ENCODE measurements at regions of chr9 and their contacts with region 1.

Region 1: DNA sequence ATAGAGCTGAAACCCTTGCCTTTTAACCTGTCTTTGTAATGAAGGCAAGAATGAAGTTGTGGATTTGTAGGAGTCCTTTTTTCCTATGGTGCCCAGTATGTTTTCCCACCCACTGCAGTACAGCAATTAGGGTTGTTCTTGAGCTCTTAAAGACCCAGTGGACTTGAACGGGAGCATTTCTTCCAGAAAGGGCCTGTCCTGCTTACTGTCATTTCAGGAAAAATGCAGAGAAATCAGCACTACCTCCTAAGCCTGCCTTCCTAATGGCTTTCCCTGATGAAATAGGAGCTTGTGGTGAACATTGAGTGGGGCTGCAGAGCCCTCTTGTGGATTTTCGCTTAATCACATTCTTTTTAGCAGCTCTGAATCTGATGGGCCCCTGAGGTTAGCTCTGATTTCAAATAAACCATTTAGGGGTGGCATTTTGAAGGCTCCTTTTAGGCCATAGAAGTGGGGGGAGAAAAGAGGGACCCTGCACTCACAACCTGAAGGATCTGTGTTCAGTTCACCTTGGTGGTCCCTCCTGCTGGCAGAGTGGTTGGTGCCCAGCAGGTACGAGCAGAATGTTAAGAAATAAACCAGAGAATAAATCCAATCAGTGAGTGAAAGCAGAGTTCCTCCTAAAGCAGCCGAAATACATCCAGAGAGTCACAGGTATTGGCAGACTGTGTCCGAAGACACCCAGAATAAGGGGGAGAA is 188.0 kb upstream of the KLF9 start:
- DNase-seq: peak in 4 of 5 donors; percentile 50 to 62 (median 53)
- ATAC-seq: peak; percentile 51 to 63 (median 59)
- H3K4me3 ChIP-seq: peak overlapping the region in 8 of 12 donors; percentile 17 to 37 (median 20)
- H3K27ac ChIP-seq: peak overlapping the region; percentile 85 to 94 (median 90)
- H3K4me1 ChIP-seq: peaks cover 0 to 32% (median 25%) of the 10 kb centered on the region in 12 donors
- H3K27me3 ChIP-seq: no peaks in the 10 kb centered on the region
- CTCF ChIP-seq: peak; percentile 52 to 89 (median 80)
- POLR2A ChIP-seq: no peak

Region 2: DNA sequence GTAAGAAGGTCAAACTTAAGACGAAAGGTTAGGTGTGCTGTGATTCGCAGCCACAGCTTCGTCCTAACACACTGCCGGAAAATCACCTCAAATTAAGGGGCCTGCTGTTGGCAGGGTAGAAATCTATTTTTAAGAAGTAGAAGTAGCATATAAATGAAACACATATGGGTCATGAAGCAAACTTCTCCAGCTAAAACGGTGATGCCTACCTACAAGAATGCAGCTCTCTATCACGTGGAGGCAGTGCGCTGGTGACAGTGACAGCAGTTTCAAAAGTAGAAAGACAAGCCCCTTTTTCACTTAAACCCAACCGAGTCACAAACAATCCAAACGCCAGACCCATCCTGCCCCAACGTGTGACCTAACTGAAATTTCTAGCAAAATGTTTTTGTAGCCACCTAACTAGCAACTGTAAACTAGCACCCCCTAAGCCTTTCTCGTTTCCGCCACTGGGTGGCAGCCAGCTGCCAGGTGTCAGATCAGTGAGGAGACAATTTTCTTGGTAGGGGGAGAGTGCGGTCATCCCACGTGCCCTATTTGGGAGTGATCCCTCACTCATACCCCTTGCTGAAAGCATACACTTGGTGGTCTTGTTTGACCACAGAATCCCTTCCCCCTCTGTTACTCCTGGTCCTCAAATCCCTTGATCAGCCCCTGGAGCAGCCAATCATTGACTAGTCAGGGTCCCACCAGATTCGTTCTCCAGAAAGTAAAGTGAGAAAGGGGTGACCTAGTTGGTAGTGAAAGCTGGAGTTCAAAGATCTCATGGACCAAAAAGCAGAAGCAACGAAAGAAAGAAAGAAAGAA is 630.6 kb before region 1 on chr9:
- intact Hi-C with region 1: loop called in 6 of 10 experiments (anchors 5 kb)
- DNase-seq: peak; percentile 54 to 82 (median 71)
- ATAC-seq: peak; percentile 50 to 86 (median 76)
- H3K4me3 ChIP-seq: no peak overlapping the region
- H3K27ac ChIP-seq: no peak overlapping the region
- H3K4me1 ChIP-seq: peaks cover 0 to 10% (median 4%) of the 10 kb centered on the region in 12 donors
- H3K27me3 ChIP-seq: no peaks in the 10 kb centered on the region
- CTCF ChIP-seq: peak; percentile 67 to 94 (median 84)
- POLR2A ChIP-seq: no peak

Region 3: DNA sequence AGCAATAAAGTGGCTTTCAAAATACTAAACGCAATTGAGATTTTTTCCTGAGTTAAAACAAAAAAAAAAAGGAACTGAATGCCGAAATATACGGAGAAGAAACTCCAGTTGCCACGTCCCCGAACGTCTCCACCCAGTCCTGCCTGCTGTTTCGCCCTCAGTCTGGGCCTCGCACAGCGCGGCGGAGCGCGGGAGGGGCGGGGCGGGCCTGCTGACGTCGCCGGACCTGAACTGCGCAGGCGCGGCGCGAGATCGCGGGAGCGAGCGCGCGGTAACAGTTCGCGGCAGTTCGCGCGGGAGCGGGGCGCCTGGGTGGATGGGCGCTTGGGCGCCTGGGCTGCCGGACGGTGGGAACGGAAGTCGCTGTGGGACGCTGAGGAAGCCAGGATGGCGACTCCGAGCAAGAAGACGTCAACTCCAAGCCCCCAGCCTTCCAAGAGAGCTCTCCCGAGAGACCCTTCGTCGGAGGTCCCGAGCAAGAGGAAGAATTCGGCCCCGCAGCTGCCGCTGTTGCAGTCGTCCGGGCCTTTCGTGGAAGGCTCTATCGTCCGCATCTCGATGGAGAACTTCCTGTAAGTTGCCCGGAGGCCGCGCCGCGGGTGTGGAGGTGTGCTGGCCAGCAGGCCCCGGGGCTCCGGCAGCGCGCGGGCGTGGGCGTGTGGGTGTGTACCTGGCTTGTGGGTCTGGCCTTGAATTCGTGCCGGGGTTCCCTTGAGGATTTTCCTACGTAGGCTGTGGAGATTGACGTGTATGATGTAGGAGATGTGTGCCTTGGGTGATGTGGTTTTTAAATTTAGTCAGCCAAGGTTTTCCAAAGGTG is 343.6 kb before region 1 on chr9 and contains the start of gene SMC5:
- intact Hi-C with region 1: loop called in 4 of 10 experiments (anchors 2 to 10 kb)
- DNase-seq: peak; percentile 91 to 95 (median 92)
- ATAC-seq: peak; percentile 92 to 97 (median 95)
- H3K4me3 ChIP-seq: peak within 1 kb of the TSS; percentile 70 to 97 (median 85)
- H3K27ac ChIP-seq: peak within 1 kb of the TSS; percentile 86 to 97 (median 94)
- H3K4me1 ChIP-seq: peaks cover 5 to 58% (median 48%) of the 10 kb centered on the region in 12 donors
- H3K27me3 ChIP-seq: no peaks in the 10 kb centered on the region
- CTCF ChIP-seq: peak in 1 of 12 donors; percentile 9
- POLR2A ChIP-seq: peak; percentile 85 to 95
- total RNA-seq, gene SMC5: 8.4 to 14.6 (median 11.4) TPM

Region 4: DNA sequence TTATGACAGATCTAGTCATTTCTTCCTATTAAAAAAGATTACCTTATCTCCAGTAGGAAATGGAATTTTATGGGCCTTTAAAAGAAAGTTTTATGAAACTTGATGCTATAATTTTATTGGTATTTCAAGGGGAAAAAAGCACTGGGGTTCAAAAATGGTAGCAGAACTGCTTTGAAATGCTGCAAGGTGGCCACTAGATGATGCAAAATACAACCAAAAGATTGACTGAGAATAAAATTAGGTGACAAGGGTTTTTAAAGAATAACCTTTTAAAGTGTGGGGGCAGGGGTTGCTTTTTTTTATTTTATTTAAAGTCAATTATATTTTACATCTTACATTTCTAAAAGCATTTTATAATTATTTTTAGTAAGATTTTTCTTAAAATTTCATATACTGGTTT is 249.7 kb before region 1 on chr9:
- intact Hi-C with region 1: loop called in 8 of 10 experiments (anchors 1 to 5 kb)
- DNase-seq: no peak
- ATAC-seq: no peak
- H3K4me3 ChIP-seq: no peak overlapping the region
- H3K27ac ChIP-seq: peak overlapping the region in 2 of 12 donors; percentile 11 to 40
- H3K4me1 ChIP-seq: peaks cover 0 to 15% (median 10%) of the 10 kb centered on the region in 12 donors
- H3K27me3 ChIP-seq: no peaks in the 10 kb centered on the region
- CTCF ChIP-seq: peak; percentile 46 to 88 (median 78)
- POLR2A ChIP-seq: no peak

Region 5: GRCh38 chr9:70413798-70414775 is 188.4 kb before region 1 on chr9 and contains the start of gene KLF9:
- intact Hi-C with region 1: loop called in 8 of 10 experiments (anchors 1 to 10 kb)
- DNase-seq: peak; percentile 93 to 97 (median 95)
- ATAC-seq: peak; percentile 77 to 82 (median 80)
- H3K4me3 ChIP-seq: peak within 1 kb of the TSS; percentile 76 to 99 (median 90)
- H3K27ac ChIP-seq: peak within 1 kb of the TSS; percentile 98 to 100 (median 100)
- H3K4me1 ChIP-seq: peaks cover 10 to 64% (median 53%) of the 10 kb centered on the region in 12 donors
- H3K27me3 ChIP-seq: no peaks in the 10 kb centered on the region
- CTCF ChIP-seq: no peak
- POLR2A ChIP-seq: peak; percentile 48 to 97
- total RNA-seq, gene KLF9: 28.7 to 74.8 (median 46.0) TPM

Region 6: GRCh38 chr9:70484210-70485130 is 118.0 kb before region 1 on chr9:
- intact Hi-C with region 1: loop called in 9 of 10 experiments (anchors 1 to 5 kb)
- DNase-seq: peak in 2 of 5 donors; percentile 48 to 56
- ATAC-seq: peak; percentile 45 to 74 (median 69)
- H3K4me3 ChIP-seq: no peak overlapping the region
- H3K27ac ChIP-seq: peak overlapping the region; percentile 14 to 95 (median 72)
- H3K4me1 ChIP-seq: peaks cover 30 to 83% (median 62%) of the 10 kb centered on the region in 12 donors
- H3K27me3 ChIP-seq: no peaks in the 10 kb centered on the region
- CTCF ChIP-seq: peak; percentile 59 to 88 (median 79)
- POLR2A ChIP-seq: no peak